PC-9 (cell line): ENCODE measurements at regions of chr11 and their contacts with region 1.

Region 1: GRCh38 chr11:58579192-58580129 is 598 bp downstream of the ZFP91 start:
- DNase-seq: peak; percentile 68 to 85
- H3K4me3 ChIP-seq: peak overlapping the region; percentile 82
- H3K27ac ChIP-seq: peak overlapping the region; percentile 86
- H3K4me1 ChIP-seq: peaks cover 59% of the 10 kb centered on the region
- H3K27me3 ChIP-seq: no peaks in the 10 kb centered on the region
- CTCF ChIP-seq: peak; percentile 77

Region 2: GRCh38 chr11:57324886-57325734 is 1254.4 kb before region 1 on chr11 and contains the start of gene TNKS1BP1:
- CTCF ChIA-PET with region 1: no interaction called
- POLR2A ChIA-PET with region 1: no interaction called
- intact Hi-C with region 1: loop called (anchors 2 kb)
- DNase-seq: peak; percentile 94 to 99
- H3K4me3 ChIP-seq: peak within 1 kb of the TSS; percentile 57
- H3K27ac ChIP-seq: peak within 1 kb of the TSS; percentile 93
- H3K4me1 ChIP-seq: peaks cover 49% of the 10 kb centered on the region
- H3K27me3 ChIP-seq: no peaks in the 10 kb centered on the region
- CTCF ChIP-seq: no peak
- total RNA-seq, gene TNKS1BP1: 181 and 218 TPM in 2 replicates

Region 3: GRCh38 chr11:57712256-57713150 is 867.0 kb before region 1 on chr11 and contains the start of gene TMX2:
- CTCF ChIA-PET with region 1: no interaction called
- POLR2A ChIA-PET with region 1: no interaction called
- intact Hi-C with region 1: loop called (anchors 1 kb)
- DNase-seq: peak; percentile 94 to 100
- H3K4me3 ChIP-seq: peak within 1 kb of the TSS; percentile 97
- H3K27ac ChIP-seq: peak within 1 kb of the TSS; percentile 75
- H3K4me1 ChIP-seq: peaks cover 25% of the 10 kb centered on the region
- H3K27me3 ChIP-seq: no peaks in the 10 kb centered on the region
- CTCF ChIP-seq: no peak
- total RNA-seq, gene TMX2: 124 and 138 TPM in 2 replicates

Region 4: GRCh38 chr11:58039589-58039988 is 539.9 kb before region 1 on chr11:
- CTCF ChIA-PET with region 1: no interaction called
- POLR2A ChIA-PET with region 1: no interaction called
- intact Hi-C with region 1: no loop called
- DNase-seq: no peak
- H3K4me3 ChIP-seq: no peak overlapping the region
- H3K27ac ChIP-seq: no peak overlapping the region
- H3K4me1 ChIP-seq: no peaks in the 10 kb centered on the region
- H3K27me3 ChIP-seq: no peaks in the 10 kb centered on the region
- CTCF ChIP-seq: no peak

Region 5: DNA sequence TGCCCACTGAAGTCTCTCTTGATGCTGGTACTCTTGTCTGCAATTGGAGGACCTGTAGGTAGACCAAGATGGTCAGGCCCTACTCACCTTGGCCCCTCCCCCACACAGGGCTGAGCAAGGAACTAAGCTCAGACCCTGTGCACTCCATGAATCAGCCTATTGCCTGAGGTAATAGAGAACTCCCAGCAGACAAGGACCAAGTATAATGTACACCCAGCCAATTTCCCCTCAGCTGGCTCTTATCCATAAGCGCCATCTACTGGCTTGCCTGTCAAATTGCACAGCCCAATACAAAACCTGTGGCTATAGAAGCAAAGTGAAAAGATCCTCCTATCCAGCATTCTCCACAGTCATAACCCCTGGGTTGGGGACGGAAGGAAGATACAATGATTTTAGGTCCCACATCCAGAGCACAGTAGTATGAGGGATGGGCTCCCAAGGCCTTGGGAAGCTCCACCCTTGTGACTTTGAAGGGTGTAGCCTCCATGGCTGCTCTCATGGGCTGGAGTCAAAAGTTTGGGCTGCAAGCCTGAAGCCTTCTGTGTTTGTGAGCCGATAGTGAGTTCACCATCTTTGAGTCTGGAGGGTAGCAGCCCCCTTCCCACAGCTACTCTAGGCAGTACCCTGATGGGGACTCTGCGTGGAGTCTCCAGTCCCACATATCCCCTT is 209.0 kb after region 1 on chr11:
- CTCF ChIA-PET with region 1: no interaction called
- POLR2A ChIA-PET with region 1: no interaction called
- intact Hi-C with region 1: loop called (anchors 2 kb)
- DNase-seq: peak; percentile 31 to 67
- H3K4me3 ChIP-seq: no peak overlapping the region
- H3K27ac ChIP-seq: peak overlapping the region; percentile 7; the same call in 1 of the 2 replicates
- H3K4me1 ChIP-seq: 0 out of 2 replicates have a peak, but pooled peaks cover 8% of the 10 kb centered on the region
- H3K27me3 ChIP-seq: no peaks in the 10 kb centered on the region
- CTCF ChIP-seq: peak; percentile 94

Region 6: GRCh38 chr11:59106363-59107336 is 527.2 kb after region 1 on chr11 and contains the start of gene FAM111B:
- CTCF ChIA-PET with region 1: no interaction called
- POLR2A ChIA-PET with region 1: no interaction called
- intact Hi-C with region 1: loop called (anchors 1 kb)
- DNase-seq: peak; percentile 90 to 94
- H3K4me3 ChIP-seq: peak within 1 kb of the TSS; percentile 60
- H3K27ac ChIP-seq: no peak within 1 kb of the TSS
- H3K4me1 ChIP-seq: peaks cover 5% of the 10 kb centered on the region; the same call in 1 of the 2 replicates
- H3K27me3 ChIP-seq: peaks cover 9% of the 10 kb centered on the region; the same call in 1 of the 2 replicates
- CTCF ChIP-seq: no peak
- total RNA-seq, gene FAM111B: 8.5 and 12.0 TPM in 2 replicates

Region 7: DNA sequence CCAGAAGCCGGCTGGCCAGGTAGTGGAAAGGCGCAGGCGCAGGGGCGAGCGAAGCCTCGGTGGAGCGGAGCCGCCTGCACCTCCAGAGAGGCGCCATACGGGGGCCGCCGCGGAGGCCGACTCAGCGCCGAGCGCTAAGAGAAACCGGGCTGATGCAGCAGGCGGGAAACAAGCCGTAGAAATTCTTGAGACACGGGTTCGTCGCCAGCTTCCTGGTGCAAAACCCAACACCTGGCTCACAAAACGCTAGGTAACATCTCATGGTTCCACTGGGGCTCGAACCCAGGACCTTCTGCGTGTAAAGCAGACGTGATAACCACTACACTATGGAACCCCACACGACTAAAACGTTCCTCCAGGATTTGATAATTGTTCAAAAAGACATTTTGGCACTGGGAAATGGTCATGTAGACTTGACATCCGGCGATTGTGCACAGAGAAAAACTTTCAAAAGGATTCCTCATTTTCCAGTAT is 970.9 kb after region 1 on chr11:
- CTCF ChIA-PET with region 1: no interaction called
- POLR2A ChIA-PET with region 1: interaction called, 3 read pairs
- intact Hi-C with region 1: loop called (anchors 5 kb)
- DNase-seq: peak; percentile 91 to 94
- H3K4me3 ChIP-seq: peak overlapping the region; percentile 71
- H3K27ac ChIP-seq: peak overlapping the region; percentile 85
- H3K4me1 ChIP-seq: peaks cover 31% of the 10 kb centered on the region
- H3K27me3 ChIP-seq: no peaks in the 10 kb centered on the region
- CTCF ChIP-seq: peak; percentile 56; the same call in 1 of the 2 replicates